ENCODE measurements at regions of chr2 and their contacts with region 1.

Region 1: DNA sequence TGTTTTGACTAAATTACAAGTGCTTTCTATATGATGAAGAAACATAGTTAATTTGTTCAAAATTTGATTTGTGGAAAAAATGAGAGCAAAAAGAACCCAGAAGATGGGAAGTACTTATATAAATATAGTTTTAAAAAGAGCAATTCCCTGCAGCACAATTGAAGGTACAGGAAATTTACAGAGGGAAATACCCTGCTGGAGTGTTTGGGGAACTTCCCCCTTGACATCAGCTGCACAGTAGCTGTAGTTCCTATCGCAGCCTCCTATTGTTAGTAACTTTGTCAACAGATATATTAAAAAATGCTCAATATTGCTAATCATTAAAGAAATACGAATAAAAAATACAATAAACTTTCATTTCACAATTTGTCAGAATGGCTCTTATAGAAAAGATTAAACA is 1118.8 kb upstream of the ZEB2 start:
- DNase-seq: no peak
- H3K4me3 ChIP-seq: no peak overlapping the region
- H3K27ac ChIP-seq: no peak overlapping the region
- H3K4me1 ChIP-seq: no peaks in the 10 kb centered on the region
- H3K27me3 ChIP-seq: no peaks in the 10 kb centered on the region
- CTCF ChIP-seq: peak in 1 of 2 donors; percentile 11

Region 2: DNA sequence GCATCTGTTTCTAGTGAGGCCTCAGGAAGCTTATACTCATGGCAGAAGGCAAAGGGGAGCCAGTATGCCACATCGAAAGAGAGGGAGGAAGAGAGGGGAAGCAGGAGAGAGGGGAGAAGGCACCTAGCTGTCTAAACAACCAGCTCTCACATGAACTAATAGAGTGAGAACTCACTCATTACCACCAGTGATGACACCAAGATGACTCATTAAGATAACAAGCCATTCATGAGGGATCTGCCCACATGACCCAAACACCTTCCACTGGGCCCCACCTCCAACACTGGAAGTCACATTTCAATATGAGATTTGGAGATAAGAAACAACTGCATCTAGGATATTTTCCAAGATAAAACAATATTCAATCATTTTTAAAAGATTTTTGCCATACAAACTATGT is 364.8 kb before region 1 on chr2:
- CTCF ChIA-PET with region 1: no interaction called
- dilution Hi-C with region 1: no loop called
- in situ Hi-C with region 1: no loop called
- intact Hi-C with region 1: no loop called
- DNase-seq: peak; percentile 61
- H3K4me3 ChIP-seq: no peak overlapping the region
- H3K27ac ChIP-seq: no peak overlapping the region
- H3K4me1 ChIP-seq: no peaks in the 10 kb centered on the region
- H3K27me3 ChIP-seq: no peaks in the 10 kb centered on the region
- CTCF ChIP-seq: no peak

Region 3: DNA sequence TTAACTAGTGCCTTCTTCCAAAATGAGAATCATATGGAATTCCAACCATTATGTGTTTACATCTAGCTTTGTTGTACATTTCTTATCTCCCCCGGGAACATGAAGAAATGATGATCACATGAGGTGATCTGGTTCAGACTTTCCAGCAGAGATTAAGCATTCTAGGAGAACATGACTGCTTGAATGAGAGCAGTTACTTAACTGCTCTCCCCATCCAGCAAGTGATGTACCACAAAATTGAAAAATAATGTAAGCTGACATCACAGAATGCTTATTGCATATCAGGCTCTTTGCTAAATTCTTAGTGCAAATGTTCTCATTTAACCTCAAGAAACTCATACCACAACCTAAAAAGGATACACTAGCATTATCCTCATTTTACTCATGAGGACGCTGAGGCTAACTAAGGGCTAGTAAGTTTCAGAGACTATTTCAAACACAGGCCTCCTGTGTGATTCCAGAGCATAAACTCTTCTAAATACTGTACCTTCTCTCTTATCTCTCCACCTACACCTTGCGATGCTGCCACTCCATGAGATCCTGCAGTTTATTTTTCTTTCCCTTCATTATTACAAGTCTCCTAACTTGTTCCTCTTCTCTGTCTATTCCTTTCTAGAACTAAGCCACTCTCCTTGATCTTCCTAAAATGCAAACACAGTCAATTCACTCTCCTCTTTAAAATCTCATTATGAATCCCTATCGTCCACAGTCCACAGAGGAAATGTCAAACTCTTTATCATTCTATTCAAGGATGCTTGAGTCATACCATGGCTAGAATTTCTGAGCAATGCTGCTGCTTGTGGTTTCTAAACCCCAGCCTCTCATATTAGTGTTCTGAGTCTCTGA is 106.1 kb after region 1 on chr2:
- CTCF ChIA-PET with region 1: no interaction called
- dilution Hi-C with region 1: no loop called
- in situ Hi-C with region 1: no loop called
- intact Hi-C with region 1: loop called (anchors 10 kb)
- DNase-seq: peak; percentile 94
- H3K4me3 ChIP-seq: no peak overlapping the region
- H3K27ac ChIP-seq: no peak overlapping the region
- H3K4me1 ChIP-seq: peaks cover 12% of the 10 kb centered on the region
- H3K27me3 ChIP-seq: no peaks in the 10 kb centered on the region
- CTCF ChIP-seq: no peak

Region 4: DNA sequence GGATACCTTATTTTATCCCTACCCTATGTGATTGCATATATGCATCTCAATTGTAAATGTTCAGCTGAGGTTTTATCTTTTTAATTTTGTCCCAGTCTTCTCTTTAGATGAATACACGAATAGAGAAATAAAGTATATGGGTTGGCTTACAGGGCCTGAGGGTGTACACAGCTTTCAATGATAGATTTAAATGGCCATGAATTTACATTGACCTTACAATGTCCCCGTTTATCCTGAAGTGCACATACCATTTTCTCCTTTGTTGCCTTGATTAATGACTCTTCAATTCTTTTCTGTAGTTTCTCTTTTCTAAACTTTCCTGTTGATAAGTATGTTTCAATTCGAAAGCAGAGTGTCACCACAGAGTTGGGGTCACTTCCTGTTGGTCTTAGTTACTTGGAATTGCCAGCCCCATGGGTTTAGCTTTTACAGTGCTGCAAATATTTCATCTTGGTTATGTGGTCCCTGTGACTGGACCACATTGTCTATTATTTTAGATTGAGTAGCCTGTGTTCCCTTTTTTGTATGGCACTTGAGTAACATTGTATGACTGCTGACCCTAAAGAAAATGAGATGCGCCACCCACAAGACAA is 589.9 kb after region 1 on chr2:
- CTCF ChIA-PET with region 1: no interaction called
- dilution Hi-C with region 1: no loop called
- in situ Hi-C with region 1: no loop called
- intact Hi-C with region 1: no loop called
- DNase-seq: no peak
- H3K4me3 ChIP-seq: no peak overlapping the region
- H3K27ac ChIP-seq: no peak overlapping the region
- H3K4me1 ChIP-seq: no peaks in the 10 kb centered on the region
- H3K27me3 ChIP-seq: peaks cover 3% of the 10 kb centered on the region
- CTCF ChIP-seq: no peak

Region 5: DNA sequence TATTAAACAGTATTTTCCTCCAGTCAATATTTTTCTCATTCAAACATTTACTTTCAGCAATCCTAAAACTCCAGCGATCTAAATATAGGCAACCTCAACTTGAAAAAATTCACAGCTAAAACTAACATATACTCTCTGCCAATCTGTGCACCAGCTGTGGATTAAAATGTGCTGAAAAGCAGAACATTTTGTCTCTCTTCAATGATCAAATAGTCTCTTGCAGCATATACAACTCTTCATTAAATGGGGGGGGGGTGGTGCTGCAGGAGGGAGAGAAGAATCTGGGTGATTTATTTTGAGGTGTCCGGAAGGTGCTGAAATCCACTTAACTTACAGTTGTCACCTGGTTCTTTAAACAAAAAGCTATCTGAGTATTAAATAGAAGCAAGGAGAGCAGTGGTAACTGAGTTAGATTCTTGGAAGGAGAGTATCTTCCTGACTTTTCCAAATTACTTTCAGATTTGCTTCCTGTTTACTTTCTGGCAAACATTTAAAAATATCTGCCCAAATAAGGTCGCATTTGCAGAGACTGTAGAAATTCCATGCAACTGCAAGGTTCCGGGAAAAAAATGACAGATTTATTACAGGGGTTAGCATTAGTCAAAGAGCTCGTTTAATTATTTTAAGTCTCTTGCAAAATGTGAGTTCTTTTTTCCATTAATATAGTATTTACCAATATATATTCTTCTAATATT is 1301.5 kb after region 1 on chr2:
- CTCF ChIA-PET with region 1: no interaction called
- dilution Hi-C with region 1: no loop called
- in situ Hi-C with region 1: no loop called
- intact Hi-C with region 1: no loop called
- DNase-seq: no peak
- H3K4me3 ChIP-seq: no peak overlapping the region
- H3K27ac ChIP-seq: no peak overlapping the region
- H3K4me1 ChIP-seq: no peaks in the 10 kb centered on the region
- H3K27me3 ChIP-seq: no peaks in the 10 kb centered on the region
- CTCF ChIP-seq: no peak

Measured in mammary epithelial cell (primary cell).